Activated T-helper 1 cell treated with anti-CD3 and anti-CD28 coated beads, Interleukin-12 subunit alpha, Interleukin-12 subunit beta, Interleukin-2, Interleukin-4 antibody, amounts not matched to agents 30 ng/mL and 10 ng/mL and 1 ng/mL, durations not matched to agents 14 hours and 24 hours and 36 hours (primary cell): ENCODE measurements at regions of chr6 and their contacts with region 1.

Region 1: GRCh38 chr6:51855310-51856082 is 231.9 kb downstream of the PKHD1 start:
- DNase-seq: peak; percentile 3
- H3K4me3 Mint-ChIP-seq: no peak overlapping the region
- H3K27ac Mint-ChIP-seq: no peak overlapping the region
- H3K4me1 Mint-ChIP-seq: no peaks in the 10 kb centered on the region
- H3K27me3 Mint-ChIP-seq: no peaks in the 10 kb centered on the region

Region 2: GRCh38 chr6:51959744-51960383 is 104.4 kb after region 1 on chr6:
- intact Hi-C with region 1: loop called (anchors 1 kb)
- DNase-seq: peak; percentile 5
- H3K4me3 Mint-ChIP-seq: no peak overlapping the region
- H3K27ac Mint-ChIP-seq: no peak overlapping the region
- H3K4me1 Mint-ChIP-seq: peaks cover 5% of the 10 kb centered on the region
- H3K27me3 Mint-ChIP-seq: peaks cover 19% of the 10 kb centered on the region

Region 3: GRCh38 chr6:52020945-52021570 is 165.6 kb after region 1 on chr6:
- intact Hi-C with region 1: loop called (anchors 1 kb)
- DNase-seq: no peak
- H3K4me3 Mint-ChIP-seq: no peak overlapping the region
- H3K27ac Mint-ChIP-seq: no peak overlapping the region
- H3K4me1 Mint-ChIP-seq: no peaks in the 10 kb centered on the region
- H3K27me3 Mint-ChIP-seq: peaks cover 7% of the 10 kb centered on the region

Region 4: DNA sequence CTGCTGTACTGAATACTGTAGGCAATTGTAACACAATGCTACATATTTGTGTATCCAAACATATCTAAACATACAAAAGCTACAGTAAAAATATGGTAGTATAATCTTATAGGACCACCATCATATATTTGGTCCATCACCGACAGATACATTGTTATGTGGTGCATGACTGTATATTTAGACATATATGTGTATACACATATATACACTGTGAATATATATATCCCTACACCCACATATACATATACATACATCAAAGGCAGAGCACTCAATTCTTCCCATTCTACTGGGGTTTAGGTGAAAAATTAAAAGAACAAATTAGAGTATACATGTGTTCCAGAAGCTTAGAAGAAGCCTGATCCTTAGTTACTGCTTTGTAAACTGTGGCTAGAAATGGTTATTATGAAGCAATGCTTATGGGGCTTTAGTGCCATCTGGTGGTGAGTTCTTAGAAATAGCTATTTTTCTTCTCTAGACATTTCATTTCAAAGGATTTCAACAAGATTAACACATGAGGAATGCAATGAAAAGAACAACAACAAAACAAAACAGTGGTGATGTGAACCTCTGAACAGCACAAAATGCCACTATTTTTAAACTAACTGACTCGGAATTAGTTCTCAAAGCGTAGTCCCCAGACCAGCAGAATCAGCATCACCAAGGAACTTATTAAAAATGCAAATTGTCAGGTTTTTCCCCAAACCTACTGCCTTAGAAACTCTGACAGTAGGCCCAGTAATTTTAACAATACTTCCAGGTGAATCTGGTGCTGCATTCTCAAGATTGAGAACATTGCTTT is 194.0 kb after region 1 on chr6:
- intact Hi-C with region 1: loop called (anchors 1 kb)
- DNase-seq: no peak
- H3K4me3 Mint-ChIP-seq: no peak overlapping the region
- H3K27ac Mint-ChIP-seq: no peak overlapping the region
- H3K4me1 Mint-ChIP-seq: no peaks in the 10 kb centered on the region
- H3K27me3 Mint-ChIP-seq: peaks cover 8% of the 10 kb centered on the region